Activated T-helper 1 cell treated with anti-CD3 and anti-CD28 coated beads, Interleukin-12 subunit alpha, Interleukin-12 subunit beta, Interleukin-2, Interleukin-4 antibody, amounts not matched to agents 30 ng/mL and 10 ng/mL and 1 ng/mL, durations not matched to agents 14 hours and 24 hours and 36 hours (primary cell): ENCODE measurements at regions of chr1 and their contacts with region 1.

Region 1: DNA sequence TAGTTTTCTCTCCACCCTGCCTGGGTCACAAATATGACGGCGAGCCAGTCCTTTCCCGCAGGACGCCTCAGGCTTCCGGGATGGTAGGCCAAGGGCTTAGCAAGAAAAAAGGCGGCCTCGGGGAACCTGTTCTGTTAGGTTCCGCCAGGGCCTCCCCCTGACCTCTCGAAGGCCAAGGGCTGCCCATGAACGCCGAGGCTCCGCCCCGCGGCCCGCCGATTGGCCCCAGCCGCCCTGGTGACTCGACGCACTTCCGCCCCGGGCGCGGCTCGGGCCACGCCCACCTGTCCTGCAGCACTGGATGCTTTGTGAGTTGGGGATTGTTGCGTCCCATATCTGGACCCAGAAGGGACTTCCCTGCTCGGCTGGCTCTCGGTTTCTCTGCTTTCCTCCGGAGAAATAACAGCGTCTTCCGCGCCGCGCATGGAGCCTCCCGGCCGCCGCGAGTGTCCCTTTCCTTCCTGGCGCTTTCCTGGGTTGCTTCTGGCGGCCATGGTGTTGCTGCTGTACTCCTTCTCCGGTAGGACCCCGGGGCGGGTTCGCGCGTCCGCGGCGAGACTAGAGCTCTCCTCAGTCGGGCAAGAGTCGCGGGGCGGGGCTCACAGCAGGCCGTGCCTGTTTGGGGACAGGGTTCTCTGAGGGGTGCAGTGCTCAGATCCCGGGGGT is at the start of gene CD46:
- DNase-seq: peak; percentile 93
- H3K4me3 Mint-ChIP-seq: peak within 1 kb of the TSS; percentile 98
- H3K27ac Mint-ChIP-seq: peak within 1 kb of the TSS; percentile 95
- H3K4me1 Mint-ChIP-seq: peaks cover 61% of the 10 kb centered on the region
- H3K27me3 Mint-ChIP-seq: no peaks in the 10 kb centered on the region
- total RNA-seq, gene CD46: 101 and 105 TPM in 2 replicates

Region 2: DNA sequence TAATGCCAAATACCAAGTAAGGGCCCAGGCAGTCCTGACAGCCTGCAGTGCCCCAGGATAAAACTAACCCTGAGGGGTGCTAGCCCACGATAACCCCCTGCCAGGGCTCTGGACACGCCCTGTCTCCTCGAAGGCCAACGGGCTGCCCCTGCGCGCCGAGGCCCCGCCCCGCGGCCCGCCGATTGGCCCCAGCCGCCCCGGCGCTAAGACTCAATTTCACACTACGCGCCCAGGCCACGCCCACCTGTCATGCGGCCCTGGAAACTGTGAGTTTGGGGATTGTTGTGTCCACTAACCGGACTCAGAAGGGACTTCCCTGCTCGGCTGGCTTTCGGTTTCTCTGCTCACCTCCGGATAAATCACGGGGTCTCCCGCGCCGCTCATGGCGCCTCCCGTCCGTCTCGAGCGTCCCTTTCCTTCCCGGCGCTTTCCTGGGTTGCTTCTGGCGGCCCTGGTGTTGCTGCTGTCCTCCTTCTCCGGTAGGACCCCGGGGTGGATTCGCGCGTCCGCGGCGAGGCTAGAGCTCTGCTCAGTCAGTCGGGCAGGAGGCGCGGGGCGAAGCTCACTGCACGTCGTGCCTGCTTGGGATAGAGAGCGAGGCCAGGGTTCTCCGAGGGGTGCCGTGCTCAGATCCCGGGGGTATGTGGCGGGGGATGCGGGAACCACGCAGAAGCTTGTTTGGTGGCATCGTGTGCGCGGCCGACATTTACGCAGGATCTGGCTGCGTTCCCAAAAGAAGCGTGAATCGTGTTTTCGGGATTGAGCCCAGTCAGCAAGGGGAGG is 106.9 kb before region 1 on chr1 and contains the start of gene CR1L:
- intact Hi-C with region 1: loop called (anchors 5 kb)
- DNase-seq: peak; percentile 74
- H3K4me3 Mint-ChIP-seq: peak within 1 kb of the TSS; percentile 80
- H3K27ac Mint-ChIP-seq: no peak within 1 kb of the TSS
- H3K4me1 Mint-ChIP-seq: peaks cover 8% of the 10 kb centered on the region
- H3K27me3 Mint-ChIP-seq: peaks cover 26% of the 10 kb centered on the region
- total RNA-seq, gene CR1L: not detected in 2 replicates

Region 3: GRCh38 chr1:207868774-207869721 is 117.1 kb after region 1 on chr1:
- intact Hi-C with region 1: loop called (anchors 5 kb)
- DNase-seq: peak; percentile 69
- H3K4me3 Mint-ChIP-seq: peak overlapping the region; percentile 92
- H3K27ac Mint-ChIP-seq: peak overlapping the region; percentile 96
- H3K4me1 Mint-ChIP-seq: peaks cover 45% of the 10 kb centered on the region
- H3K27me3 Mint-ChIP-seq: no peaks in the 10 kb centered on the region

Region 4: DNA sequence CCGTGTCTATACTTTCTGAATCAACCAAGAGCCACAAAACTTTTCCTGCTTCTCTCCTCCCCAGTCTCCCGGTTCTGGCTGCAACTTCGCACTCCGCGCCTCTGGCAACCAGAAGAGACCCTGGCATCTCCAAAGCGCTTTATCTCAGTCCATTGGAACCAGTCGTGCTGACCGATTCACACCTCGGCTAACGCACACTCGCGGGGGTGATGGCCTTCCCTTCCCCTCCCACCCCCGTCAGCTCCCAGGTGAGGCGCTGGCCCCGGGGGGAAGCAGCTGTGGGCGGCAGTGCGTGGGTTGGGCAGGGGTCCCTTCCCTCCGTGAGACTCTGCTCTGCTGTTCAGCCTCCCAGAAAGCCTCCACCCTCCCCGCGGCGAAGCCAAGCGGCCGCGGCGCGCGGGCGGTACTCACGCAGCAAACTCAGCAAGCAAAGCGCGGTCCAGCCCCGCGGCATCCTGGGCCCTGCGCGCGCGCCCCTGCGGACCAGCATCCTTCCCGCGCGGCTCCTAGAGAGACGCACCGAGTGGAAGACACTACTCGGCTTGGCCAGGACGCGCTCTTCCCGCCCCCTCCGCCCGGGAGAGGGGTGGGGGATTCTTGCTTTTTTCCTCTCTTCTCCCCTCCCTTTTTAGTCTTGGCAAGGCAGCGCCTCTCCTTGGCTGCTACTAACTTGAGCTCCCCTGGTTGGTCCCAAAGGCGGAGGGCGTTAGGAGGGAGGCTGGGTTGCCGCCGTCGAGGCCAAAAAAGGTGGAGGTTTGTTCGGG is 158.8 kb after region 1 on chr1 and contains the start of gene CD34:
- intact Hi-C with region 1: no loop called
- DNase-seq: no peak
- H3K4me3 Mint-ChIP-seq: peak within 1 kb of the TSS; percentile 40
- H3K27ac Mint-ChIP-seq: no peak within 1 kb of the TSS
- H3K4me1 Mint-ChIP-seq: peaks cover 19% of the 10 kb centered on the region
- H3K27me3 Mint-ChIP-seq: peaks cover 66% of the 10 kb centered on the region
- total RNA-seq, gene CD34: not detected in 2 replicates